ENCODE measurements at regions of chr2 and their contacts with region 1.

Region 1: DNA sequence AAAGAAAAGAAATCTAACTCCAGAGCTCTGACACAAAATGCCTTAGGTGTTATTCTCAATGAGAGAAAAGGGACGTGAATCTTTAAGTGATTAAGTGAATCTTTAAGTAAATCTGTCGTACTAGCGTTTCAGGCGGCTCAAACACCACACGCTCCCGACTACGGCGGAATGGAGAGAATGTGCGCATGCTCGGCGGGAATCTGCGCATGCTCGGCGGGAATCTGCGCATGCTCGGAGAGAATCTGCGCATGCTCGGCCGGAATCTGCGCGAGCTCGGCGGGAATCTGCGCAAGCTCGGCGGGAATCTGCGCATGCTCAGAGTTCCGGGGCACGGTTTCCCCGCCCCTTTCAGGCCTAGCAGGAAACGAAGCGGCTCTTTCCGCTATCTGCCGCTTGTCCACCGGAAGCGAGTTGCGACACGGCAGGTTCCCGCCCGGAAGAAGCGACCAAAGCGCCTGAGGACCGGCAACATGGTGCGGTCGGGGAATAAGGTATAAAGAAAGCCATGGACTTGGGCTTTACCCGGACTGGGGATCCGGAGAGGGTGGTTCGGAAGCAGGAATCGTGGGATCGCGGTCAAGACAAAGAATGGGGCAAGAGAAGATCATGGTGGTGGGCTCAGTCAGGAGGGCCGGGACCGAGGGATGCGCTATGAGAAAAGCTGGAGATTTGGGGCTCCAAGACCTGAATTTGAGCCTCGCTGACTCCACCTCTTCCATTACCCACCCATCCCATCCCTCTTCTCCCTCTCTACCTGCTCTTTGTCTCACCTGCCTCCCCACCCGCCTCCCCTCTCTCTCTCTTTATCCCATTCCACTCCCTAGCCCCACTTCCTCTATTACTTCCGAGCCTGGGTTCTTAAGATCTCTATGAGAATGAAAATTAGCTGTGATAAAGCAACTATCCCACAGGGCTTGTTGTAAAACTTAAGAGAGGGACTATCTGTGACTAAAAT is at the start of gene XRCC5:
- DNase-seq: peak; percentile 99
- ATAC-seq: peak; percentile 75
- H3K4me3 Mint-ChIP-seq: peak within 1 kb of the TSS; percentile 95
- H3K27ac Mint-ChIP-seq: peak within 1 kb of the TSS; percentile 98
- H3K4me1 Mint-ChIP-seq: peaks cover 46% of the 10 kb centered on the region
- H3K27me3 Mint-ChIP-seq: no peaks in the 10 kb centered on the region
- total RNA-seq, gene XRCC5: 395 to 536 TPM

Region 2: GRCh38 chr2:215713391-215713790 is 395.9 kb before region 1 on chr2:
- CTCF ChIA-PET with region 1: no interaction called
- POLR2A ChIA-PET with region 1: no interaction called
- intact Hi-C with region 1: no loop called
- DNase-seq: no peak
- ATAC-seq: no peak
- H3K4me3 Mint-ChIP-seq: no peak overlapping the region
- H3K27ac Mint-ChIP-seq: no peak overlapping the region
- H3K4me1 Mint-ChIP-seq: peaks cover 7% of the 10 kb centered on the region
- H3K27me3 Mint-ChIP-seq: peaks cover 2% of the 10 kb centered on the region

Region 3: DNA sequence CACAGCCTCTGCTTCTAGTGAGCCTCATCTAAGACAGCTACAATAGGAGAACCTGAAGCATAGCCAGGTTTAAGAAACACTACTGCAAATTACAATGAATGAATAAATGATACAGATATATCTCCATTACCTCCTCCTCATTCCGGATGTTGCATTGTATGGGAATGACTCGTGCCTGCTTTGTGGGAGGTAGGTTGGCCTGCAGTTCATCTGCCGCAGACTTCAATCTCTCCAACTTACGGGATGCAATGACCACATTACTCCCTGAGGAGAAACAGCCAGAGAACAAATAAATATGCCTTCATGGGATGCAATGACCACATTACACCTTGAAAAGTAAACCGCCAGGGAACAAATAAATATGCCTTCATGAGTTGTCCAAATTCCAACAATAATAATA is 43.0 kb before region 1 on chr2:
- CTCF ChIA-PET with region 1: no interaction called
- POLR2A ChIA-PET with region 1: no interaction called
- intact Hi-C with region 1: no loop called
- DNase-seq: no peak
- ATAC-seq: no peak
- H3K4me3 Mint-ChIP-seq: no peak overlapping the region
- H3K27ac Mint-ChIP-seq: no peak overlapping the region
- H3K4me1 Mint-ChIP-seq: peaks cover 13% of the 10 kb centered on the region
- H3K27me3 Mint-ChIP-seq: no peaks in the 10 kb centered on the region

Region 4: DNA sequence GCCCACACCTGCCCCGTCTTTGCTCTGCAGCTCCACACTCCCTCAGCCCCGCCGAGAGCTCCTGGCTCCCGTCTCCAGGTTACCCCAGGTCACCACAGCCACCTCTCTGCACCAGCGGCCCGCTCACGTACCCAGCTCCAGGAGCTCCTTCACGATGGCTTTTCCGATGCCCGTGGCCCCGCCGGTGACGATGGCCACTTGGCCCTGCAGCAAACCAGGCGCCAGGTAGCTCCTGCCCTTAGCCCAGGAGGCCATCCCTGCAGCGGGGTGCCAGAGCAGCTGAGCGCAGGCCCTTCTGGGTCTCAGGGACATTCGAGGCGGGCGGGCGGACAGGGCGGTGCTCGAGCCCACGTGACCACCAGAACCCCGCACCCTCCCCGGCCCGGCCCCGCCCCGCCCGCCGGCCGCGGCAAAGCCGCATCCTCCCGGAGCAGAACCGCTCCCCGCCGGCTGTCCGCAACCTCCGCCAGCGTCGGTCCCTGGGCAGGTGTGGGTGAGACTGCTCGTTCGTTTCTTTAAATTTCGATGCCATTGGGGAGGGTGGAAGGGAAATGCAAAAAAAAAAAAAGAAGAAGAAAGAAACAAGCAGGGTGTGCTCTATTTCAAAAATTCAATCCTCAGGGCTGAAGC is 27.6 kb before region 1 on chr2 and contains the starts of genes PECR and TMEM169:
- CTCF ChIA-PET with region 1: interaction called, 48 read pairs
- POLR2A ChIA-PET with region 1: interaction called, 9 read pairs
- intact Hi-C with region 1: loop called (anchors 1 to 2 kb)
- DNase-seq: peak; percentile 89
- ATAC-seq: peak; percentile 93
- H3K4me3 Mint-ChIP-seq: peak within 1 kb of the TSS; percentile 81
- H3K27ac Mint-ChIP-seq: peak within 1 kb of the TSS; percentile 81
- H3K4me1 Mint-ChIP-seq: peaks cover 59% of the 10 kb centered on the region
- H3K27me3 Mint-ChIP-seq: no peaks in the 10 kb centered on the region
- total RNA-seq, gene PECR: 17.0 to 20.8 TPM
- total RNA-seq, gene TMEM169: 1.6 to 1.8 TPM

Region 5: DNA sequence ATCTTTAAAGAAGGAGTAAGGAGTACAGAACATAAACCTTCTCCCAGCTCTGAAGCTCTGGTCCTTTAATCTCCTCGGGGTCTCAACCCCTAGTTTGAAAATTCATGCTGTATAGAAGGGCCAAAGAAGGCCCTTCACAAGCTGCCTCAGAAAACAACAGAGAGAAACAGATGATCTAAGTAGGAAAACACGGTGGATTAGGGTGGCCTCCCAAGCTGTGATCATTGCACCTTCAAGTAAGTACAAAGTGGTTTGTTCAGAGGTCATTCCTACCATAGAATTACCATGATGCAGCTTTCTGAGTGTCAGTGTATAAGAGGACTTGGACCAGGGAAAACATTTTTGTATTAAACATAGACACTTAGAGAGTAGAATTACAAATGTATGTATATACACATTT is 16.6 kb before region 1 on chr2:
- CTCF ChIA-PET with region 1: interaction called, 14 read pairs
- POLR2A ChIA-PET with region 1: no interaction called
- intact Hi-C with region 1: no loop called
- DNase-seq: no peak
- ATAC-seq: no peak
- H3K4me3 Mint-ChIP-seq: no peak overlapping the region
- H3K27ac Mint-ChIP-seq: no peak overlapping the region
- H3K4me1 Mint-ChIP-seq: peaks cover 23% of the 10 kb centered on the region
- H3K27me3 Mint-ChIP-seq: no peaks in the 10 kb centered on the region

Region 6: DNA sequence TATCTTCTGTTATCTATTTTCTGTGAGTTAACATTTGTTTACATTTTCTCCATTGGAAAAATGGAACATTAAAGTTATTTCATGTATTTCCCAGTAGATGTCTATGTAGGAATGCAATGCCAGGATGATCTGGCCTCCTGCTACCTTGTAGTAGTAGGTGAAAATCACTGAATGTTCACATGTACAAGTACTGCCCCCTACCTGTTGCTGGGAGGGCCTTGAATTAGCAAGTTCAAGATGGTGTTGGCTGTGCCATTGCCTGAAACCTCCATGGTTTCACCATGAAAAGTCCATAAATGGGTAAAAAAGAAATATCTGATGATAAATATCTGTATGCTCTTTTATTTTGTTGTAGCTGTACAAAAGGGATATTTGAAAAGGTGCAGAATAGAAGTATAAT is 30.6 kb after region 1 on chr2:
- CTCF ChIA-PET with region 1: interaction called, 23 read pairs
- POLR2A ChIA-PET with region 1: no interaction called
- intact Hi-C with region 1: loop called in 1 of 2 experiments (anchors 1 kb)
- DNase-seq: peak; percentile 56
- ATAC-seq: peak; percentile 42
- H3K4me3 Mint-ChIP-seq: no peak overlapping the region
- H3K27ac Mint-ChIP-seq: no peak overlapping the region
- H3K4me1 Mint-ChIP-seq: peaks cover 34% of the 10 kb centered on the region
- H3K27me3 Mint-ChIP-seq: no peaks in the 10 kb centered on the region

Measured in activated CD4-positive, alpha-beta T cell treated with anti-CD3 and anti-CD28 coated beads for 36 hours (primary cell).